Activated T-helper 1 cell treated with anti-CD3 and anti-CD28 coated beads, Interleukin-12 subunit alpha, Interleukin-12 subunit beta, Interleukin-2, Interleukin-4 antibody, amounts not matched to agents 30 ng/mL and 10 ng/mL and 1 ng/mL, durations not matched to agents 14 hours and 24 hours and 36 hours (primary cell): ENCODE measurements at regions of chr4 and their contacts with region 1.

Region 1: DNA sequence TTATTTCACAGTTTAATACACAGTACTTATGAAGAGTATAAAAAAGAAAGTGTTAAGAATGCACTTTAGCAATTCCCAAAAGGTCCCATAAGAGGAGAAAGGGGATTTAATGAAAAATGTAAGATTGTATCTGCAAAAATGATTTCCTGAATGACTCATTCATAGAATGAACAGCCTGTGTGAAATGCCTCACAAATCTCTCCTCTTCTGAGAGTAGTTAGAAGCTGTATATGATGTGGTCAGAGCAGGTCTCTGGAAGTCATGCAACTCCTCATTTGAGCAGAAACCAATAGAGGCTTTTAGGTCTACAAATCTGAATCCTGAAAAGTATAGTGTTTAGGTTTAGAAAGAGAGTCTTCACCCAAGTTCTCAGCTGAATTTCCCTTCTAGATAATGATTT is 381.3 kb upstream of the INTU start:
- DNase-seq: no peak
- H3K4me3 Mint-ChIP-seq: no peak overlapping the region
- H3K27ac Mint-ChIP-seq: no peak overlapping the region
- H3K4me1 Mint-ChIP-seq: no peaks in the 10 kb centered on the region
- H3K27me3 Mint-ChIP-seq: no peaks in the 10 kb centered on the region

Region 2: DNA sequence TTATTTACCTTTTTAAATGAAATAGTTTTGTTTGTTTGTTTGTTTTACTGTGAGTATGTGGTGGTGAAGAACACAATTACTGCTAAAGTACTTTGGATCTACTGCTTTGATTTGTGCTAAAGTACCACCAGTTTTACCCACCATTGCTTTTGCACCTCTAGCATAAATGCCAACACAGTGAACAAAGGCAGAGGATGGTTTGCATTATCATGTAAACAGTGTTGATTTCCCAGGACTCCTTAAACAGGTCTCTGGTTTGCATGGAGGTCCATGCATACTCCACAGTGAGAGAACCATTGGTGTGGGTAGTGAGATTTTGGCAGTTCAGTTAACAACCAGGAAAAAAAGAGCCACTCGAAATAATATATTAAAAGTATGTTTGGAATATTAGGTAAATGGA is 1925.7 kb before region 1 on chr4:
- intact Hi-C with region 1: loop called (anchors 5 kb)
- DNase-seq: no peak
- H3K4me3 Mint-ChIP-seq: no peak overlapping the region
- H3K27ac Mint-ChIP-seq: no peak overlapping the region
- H3K4me1 Mint-ChIP-seq: no peaks in the 10 kb centered on the region
- H3K27me3 Mint-ChIP-seq: no peaks in the 10 kb centered on the region